ENCODE measurements at regions of chr17 and their contacts with region 1.

Region 1: GRCh38 chr17:20944014-20944865 is 98.6 kb downstream of the USP22 start:
- DNase-seq: peak in 5 of 9 donors; percentile 23 to 36 (median 25)
- ATAC-seq: peak; percentile 69
- H3K4me3 ChIP-seq: no peak overlapping the region
- H3K4me3 Mint-ChIP-seq: no peak overlapping the region
- H3K27ac ChIP-seq: no peak overlapping the region
- H3K27ac Mint-ChIP-seq: peak overlapping the region in 1 of 9 donors; percentile 29
- H3K4me1 ChIP-seq: no peaks in the 10 kb centered on the region
- H3K4me1 Mint-ChIP-seq: peaks cover 0 to 4% (median 0%) of the 10 kb centered on the region in 7 donors
- H3K27me3 ChIP-seq: no peaks in the 10 kb centered on the region
- H3K27me3 Mint-ChIP-seq: peaks cover 0 to 13% (median 5%) of the 10 kb centered on the region in 5 donors

Region 2: GRCh38 chr17:20823905-20824304 is 120.3 kb before region 1 on chr17:
- CTCF ChIA-PET with region 1: no interaction called
- POLR2A ChIA-PET with region 1: no interaction called
- intact Hi-C with region 1: no loop called
- DNase-seq: no peak
- ATAC-seq: no peak
- H3K4me3 ChIP-seq: no peak overlapping the region
- H3K4me3 Mint-ChIP-seq: no peak overlapping the region
- H3K27ac ChIP-seq: no peak overlapping the region
- H3K27ac Mint-ChIP-seq: no peak overlapping the region
- H3K4me1 ChIP-seq: no peaks in the 10 kb centered on the region
- H3K4me1 Mint-ChIP-seq: no peaks in the 10 kb centered on the region
- H3K27me3 ChIP-seq: no peaks in the 10 kb centered on the region
- H3K27me3 Mint-ChIP-seq: peaks cover 6 to 15% (median 11%) of the 10 kb centered on the region in 5 donors

Region 3: DNA sequence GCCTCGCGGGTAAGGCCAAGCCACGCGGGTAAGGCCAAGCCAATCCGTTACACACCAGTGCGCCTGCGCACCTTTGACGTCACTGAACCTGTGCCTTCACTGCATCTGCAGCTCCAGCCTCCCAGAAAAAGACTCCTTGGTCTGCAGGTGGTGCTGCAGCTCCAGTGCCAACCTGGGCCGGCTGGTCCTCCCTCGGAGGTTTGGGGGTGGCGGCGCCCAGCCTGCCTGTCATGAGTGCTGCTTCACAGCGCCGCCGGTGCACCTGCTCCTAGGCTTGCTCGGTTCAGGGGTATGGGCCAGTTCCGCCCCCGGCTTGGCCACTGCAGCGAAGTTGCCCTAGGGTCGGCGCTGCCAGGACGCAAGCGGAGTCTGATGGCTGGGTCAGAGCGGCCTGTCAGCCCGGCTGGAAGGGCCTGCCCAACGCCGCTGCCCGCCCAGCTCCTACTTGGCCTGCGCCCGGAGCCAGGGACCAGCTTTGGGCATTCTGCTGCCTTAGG is 48.0 kb before region 1 on chr17:
- CTCF ChIA-PET with region 1: no interaction called
- POLR2A ChIA-PET with region 1: no interaction called
- intact Hi-C with region 1: no loop called
- DNase-seq: peak in 7 of 9 donors; percentile 14 to 53 (median 28)
- ATAC-seq: peak; percentile 26
- H3K4me3 ChIP-seq: no peak overlapping the region
- H3K4me3 Mint-ChIP-seq: peak overlapping the region in 1 of 10 donors; percentile 37
- H3K27ac ChIP-seq: no peak overlapping the region
- H3K27ac Mint-ChIP-seq: no peak overlapping the region
- H3K4me1 ChIP-seq: no peaks in the 10 kb centered on the region
- H3K4me1 Mint-ChIP-seq: peaks cover 0 to 4% (median 0%) of the 10 kb centered on the region in 7 donors
- H3K27me3 ChIP-seq: no peaks in the 10 kb centered on the region
- H3K27me3 Mint-ChIP-seq: peaks cover 0 to 9% (median 0%) of the 10 kb centered on the region in 5 donors

Region 4: GRCh38 chr17:20992987-20993862 is 49.0 kb after region 1 on chr17:
- CTCF ChIA-PET with region 1: no interaction called
- POLR2A ChIA-PET with region 1: no interaction called
- intact Hi-C with region 1: loop called in 1 of 2 experiments (anchors 1 kb)
- DNase-seq: peak; percentile 51 to 75 (median 65)
- ATAC-seq: peak; percentile 88
- H3K4me3 ChIP-seq: no peak overlapping the region
- H3K4me3 Mint-ChIP-seq: peak overlapping the region in 2 of 10 donors; percentile 21 to 25
- H3K27ac ChIP-seq: no peak overlapping the region
- H3K27ac Mint-ChIP-seq: peak overlapping the region in 3 of 9 donors; percentile 24 to 70 (median 38)
- H3K4me1 ChIP-seq: peaks cover 0 to under 1% of the 10 kb centered on the region in 2 donors
- H3K4me1 Mint-ChIP-seq: peaks cover 6 to 14% (median 7%) of the 10 kb centered on the region in 7 donors
- H3K27me3 ChIP-seq: no peaks in the 10 kb centered on the region
- H3K27me3 Mint-ChIP-seq: no peaks in the 10 kb centered on the region

Region 5: DNA sequence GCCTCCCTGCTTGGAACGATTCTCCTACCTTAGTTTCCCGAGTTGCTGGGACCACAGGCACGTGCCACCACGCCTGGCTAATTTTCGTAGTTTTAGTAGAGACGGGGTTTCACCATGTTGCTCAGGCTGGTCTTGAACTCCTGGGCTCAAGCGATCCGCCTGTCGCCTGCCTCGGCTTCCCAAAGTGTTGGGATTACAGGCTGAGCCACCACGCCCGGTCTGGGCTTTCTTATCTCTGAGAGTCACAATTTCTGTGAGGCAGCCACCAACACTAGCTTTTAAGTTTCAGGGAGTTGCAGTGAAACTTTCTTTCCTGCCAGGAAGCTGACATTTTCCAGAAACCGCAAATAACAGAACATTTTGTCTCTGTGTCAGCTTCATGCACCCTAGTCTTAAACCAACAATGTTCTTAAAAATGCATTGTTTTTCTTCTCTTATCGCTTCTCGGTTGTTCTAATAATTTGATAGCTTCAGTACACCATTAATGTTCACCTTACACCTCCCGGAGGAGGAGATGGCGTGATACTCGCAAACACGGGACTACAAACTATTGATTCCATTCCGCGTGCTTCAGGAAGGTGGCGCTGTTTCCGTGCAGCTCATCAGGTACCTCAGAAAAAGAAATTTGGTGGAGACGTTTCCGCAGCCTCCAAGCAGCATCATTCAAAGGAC is 175.1 kb after region 1 on chr17:
- CTCF ChIA-PET with region 1: no interaction called
- POLR2A ChIA-PET with region 1: no interaction called
- intact Hi-C with region 1: loop called in 1 of 2 experiments (anchors 1 kb)
- DNase-seq: peak; percentile 36 to 76 (median 62)
- ATAC-seq: peak; percentile 91
- H3K4me3 ChIP-seq: no peak overlapping the region
- H3K4me3 Mint-ChIP-seq: peak overlapping the region in 7 of 10 donors; percentile 1 to 72 (median 40)
- H3K27ac ChIP-seq: no peak overlapping the region
- H3K27ac Mint-ChIP-seq: peak overlapping the region in 3 of 9 donors; percentile 6 to 47 (median 35)
- H3K4me1 ChIP-seq: peaks cover 0 to 5% of the 10 kb centered on the region in 2 donors
- H3K4me1 Mint-ChIP-seq: peaks cover 6 to 15% (median 10%) of the 10 kb centered on the region in 7 donors
- H3K27me3 ChIP-seq: no peaks in the 10 kb centered on the region
- H3K27me3 Mint-ChIP-seq: peaks cover 0 to 16% (median 5%) of the 10 kb centered on the region in 5 donors

Measured in naive thymus-derived CD4-positive, alpha-beta T cell (primary cell).